ENCODE measurements at regions of chr3 and their contacts with region 1.

Region 1: GRCh38 chr3:197847866-197848401 is 56.9 kb downstream of the LRCH3 start:
- DNase-seq: peak; percentile 22
- H3K4me3 ChIP-seq: no peak overlapping the region
- H3K27ac ChIP-seq: peak overlapping the region; percentile 24
- H3K4me1 ChIP-seq: no peaks in the 10 kb centered on the region
- H3K27me3 ChIP-seq: no peaks in the 10 kb centered on the region
- CTCF ChIP-seq: no peak

Region 2: DNA sequence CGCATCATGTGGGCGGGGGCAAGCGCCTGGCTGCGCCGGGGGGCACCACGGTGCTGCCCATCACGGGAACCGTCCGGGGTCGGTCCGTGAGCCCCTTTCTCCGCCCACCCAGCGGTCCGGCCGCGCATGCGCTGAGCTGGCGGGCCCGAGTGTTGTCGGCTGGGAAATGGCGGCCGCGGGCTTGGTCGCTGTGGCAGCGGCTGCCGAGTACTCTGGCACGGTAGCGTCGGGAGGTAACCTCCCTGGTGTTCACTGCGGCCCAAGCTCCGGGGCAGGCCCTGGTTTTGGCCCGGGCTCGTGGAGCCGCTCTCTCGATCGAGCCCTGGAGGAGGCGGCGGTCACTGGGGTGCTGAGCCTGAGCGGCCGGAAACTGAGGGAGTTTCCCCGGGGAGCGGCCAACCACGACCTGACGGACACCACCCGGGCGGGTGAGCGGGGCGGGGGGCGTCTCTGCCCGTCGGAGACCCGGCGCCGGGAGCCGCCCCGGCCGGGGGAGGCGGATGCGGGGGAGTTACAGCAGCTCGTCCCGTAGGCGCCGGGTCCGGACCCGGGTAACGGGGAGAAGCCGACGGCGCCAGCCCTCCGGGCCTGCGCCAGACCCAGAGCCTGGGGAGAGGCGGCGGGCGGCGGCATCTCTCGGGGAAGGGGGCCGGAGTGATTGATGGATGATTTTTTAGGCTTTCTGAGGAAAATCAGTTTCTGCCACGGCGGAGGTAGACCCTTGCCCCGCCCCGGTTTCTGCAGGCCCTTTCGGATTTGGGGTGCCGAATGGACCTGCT is 56.6 kb before region 1 on chr3 and contains the start of gene LRCH3:
- intact Hi-C with region 1: loop called (anchors 10 kb)
- DNase-seq: peak; percentile 78
- H3K4me3 ChIP-seq: peak within 1 kb of the TSS; percentile 88
- H3K27ac ChIP-seq: peak within 1 kb of the TSS; percentile 89
- H3K4me1 ChIP-seq: peaks cover 7% of the 10 kb centered on the region
- H3K27me3 ChIP-seq: no peaks in the 10 kb centered on the region
- CTCF ChIP-seq: no peak
- total RNA-seq, gene LRCH3: 33.5 to 34.9 TPM

Measured in colonic mucosa (tissue), 4 donors.